ENCODE measurements at regions of chr11 and their contacts with region 1.

Region 1: DNA sequence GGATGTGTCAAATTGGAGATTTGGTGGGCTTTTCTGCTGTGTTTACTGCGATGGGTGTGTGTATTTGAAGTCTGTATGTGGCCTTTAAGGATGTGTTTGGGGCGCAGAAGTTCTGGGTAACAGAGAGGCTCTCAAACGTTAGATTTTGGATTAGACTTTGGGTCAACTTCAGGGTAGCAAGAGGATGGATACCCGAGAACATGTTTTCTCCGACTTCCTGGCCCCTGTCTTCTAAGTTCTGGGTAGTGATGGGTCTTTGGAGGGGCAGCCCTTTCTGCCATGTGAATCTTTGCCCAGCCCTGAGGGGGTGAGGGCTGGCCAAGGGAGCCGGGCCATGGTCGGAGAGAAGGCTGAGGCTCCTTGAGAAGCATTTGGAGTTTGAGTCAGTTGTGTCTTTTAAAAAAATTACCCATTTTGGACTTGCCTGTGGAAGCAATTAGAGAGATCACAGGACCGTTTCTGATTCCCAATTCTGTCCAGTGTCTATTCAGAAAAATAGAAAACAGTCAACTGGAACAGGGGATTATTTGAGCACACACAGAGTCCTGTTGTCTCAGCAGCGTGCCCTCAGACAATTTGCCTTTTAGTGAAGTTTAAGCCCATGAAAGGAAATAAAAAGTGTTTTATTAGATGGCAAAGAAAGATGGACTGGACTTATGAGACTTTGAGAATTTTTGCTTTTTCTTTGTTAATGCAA is 114.4 kb downstream of the PTPRJ start:
- DNase-seq: no peak
- ATAC-seq: no peak
- H3K4me3 ChIP-seq: no peak overlapping the region
- H3K27ac ChIP-seq: no peak overlapping the region
- H3K4me1 ChIP-seq: peaks cover 37% of the 10 kb centered on the region
- H3K27me3 ChIP-seq: no peaks in the 10 kb centered on the region
- CTCF ChIP-seq: no peak

Region 2: DNA sequence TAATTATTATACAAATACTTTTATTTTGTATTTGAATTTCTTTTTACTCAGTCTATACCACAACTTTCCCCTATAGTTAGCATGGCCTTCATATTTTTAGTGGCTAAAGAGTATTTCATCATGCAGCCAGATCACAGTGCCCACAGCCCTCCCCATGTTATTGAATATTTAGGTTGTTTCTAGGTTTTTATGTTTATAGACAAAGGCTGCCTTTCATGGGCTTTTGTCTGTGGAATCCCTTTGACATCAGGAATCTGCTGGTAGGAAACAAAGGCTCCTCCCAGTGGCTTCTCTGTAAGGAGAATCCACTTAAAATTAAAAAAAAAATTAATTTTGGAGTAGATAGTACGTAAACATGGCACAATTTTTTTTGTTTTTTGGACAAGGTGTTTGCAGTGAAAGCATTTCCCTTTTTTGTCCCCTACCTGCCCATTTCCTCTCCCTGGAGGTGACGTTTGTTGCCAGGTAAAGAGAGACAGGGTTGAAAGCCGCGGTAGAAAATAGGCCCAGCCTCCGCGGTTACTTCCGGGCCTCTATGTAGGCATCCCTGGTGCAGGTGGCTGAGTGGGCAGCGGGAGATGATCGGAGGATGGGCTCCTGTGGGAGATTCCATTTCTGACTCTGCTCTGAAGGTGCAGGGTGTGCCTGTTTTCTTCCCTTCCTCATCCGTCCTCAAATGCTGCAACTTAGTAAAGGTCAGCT is 39.6 kb after region 1 on chr11:
- CTCF ChIA-PET with region 1: no interaction called
- POLR2A ChIA-PET with region 1: interaction called, 10 read pairs
- in situ Hi-C with region 1: no loop called
- intact Hi-C with region 1: no loop called
- DNase-seq: no peak
- ATAC-seq: no peak
- H3K4me3 ChIP-seq: no peak overlapping the region
- H3K27ac ChIP-seq: no peak overlapping the region
- H3K4me1 ChIP-seq: no peaks in the 10 kb centered on the region
- H3K27me3 ChIP-seq: no peaks in the 10 kb centered on the region
- CTCF ChIP-seq: no peak

Measured in Panc1 (cell line).